PC-3 (cell line): ENCODE measurements at regions of chr9 and their contacts with region 1.

Region 1: GRCh38 chr9:21252721-21253547 is 13.1 kb upstream of the IFNA14 start:
- DNase-seq: peak; percentile 44
- ATAC-seq: peak; percentile 81
- H3K4me3 ChIP-seq: peak overlapping the region; percentile 42
- H3K27ac ChIP-seq: no peak overlapping the region
- H3K4me1 ChIP-seq: no peaks in the 10 kb centered on the region
- H3K27me3 ChIP-seq: peaks cover 14% of the 10 kb centered on the region
- CTCF ChIP-seq: peak; percentile 77

Region 2: DNA sequence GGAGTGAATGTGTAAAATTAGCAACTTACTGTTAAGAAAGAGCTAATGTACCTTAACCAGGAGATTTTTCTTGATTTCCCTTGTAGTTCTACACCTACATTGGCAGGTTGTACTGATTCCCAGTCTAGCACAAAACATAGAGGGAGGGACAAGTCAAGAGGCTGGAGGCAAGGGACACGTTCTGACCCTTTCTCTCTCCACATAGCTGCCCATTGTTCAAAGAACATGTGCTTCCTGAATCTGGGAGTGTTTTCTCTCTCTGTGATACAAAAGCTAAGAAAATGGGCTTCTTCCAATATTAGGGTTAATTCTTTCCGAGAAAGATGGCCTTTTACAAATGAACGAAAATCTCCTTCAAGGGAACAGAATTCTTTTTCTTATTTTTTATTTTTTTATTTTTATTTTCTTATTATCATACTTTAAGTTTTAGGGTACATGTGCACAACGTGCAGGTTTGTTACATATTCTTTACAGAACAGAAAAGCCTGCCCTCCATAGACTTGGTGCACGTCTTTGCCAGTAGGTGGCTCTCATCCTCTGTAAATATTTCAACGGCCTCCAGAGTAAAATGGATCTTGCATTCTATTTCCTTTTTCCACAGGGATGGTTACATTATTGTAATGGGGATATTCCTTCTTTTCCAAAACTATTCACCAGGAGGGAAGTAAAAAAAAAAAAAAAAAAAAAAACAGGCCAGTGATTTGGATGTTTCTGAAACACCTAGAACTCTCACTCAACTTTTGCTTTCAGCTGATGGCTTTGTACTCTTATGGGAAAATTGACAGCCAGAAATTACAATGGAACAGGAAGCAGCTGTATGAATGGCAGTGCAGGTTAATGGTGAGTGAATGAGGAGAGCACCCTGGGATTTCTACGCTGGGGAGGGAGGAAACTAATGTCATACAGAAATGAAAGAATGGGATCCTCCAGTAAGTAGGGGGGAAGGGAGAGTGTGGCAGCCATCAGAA is 65.3 kb after region 1 on chr9:
- CTCF ChIA-PET with region 1: interaction called, 9 read pairs
- POLR2A ChIA-PET with region 1: no interaction called
- intact Hi-C with region 1: loop called (anchors 2 kb)
- DNase-seq: peak; percentile 64
- ATAC-seq: peak; percentile 76
- H3K4me3 ChIP-seq: no peak overlapping the region
- H3K27ac ChIP-seq: no peak overlapping the region
- H3K4me1 ChIP-seq: no peaks in the 10 kb centered on the region
- H3K27me3 ChIP-seq: no peaks in the 10 kb centered on the region
- CTCF ChIP-seq: peak; percentile 62

Region 3: DNA sequence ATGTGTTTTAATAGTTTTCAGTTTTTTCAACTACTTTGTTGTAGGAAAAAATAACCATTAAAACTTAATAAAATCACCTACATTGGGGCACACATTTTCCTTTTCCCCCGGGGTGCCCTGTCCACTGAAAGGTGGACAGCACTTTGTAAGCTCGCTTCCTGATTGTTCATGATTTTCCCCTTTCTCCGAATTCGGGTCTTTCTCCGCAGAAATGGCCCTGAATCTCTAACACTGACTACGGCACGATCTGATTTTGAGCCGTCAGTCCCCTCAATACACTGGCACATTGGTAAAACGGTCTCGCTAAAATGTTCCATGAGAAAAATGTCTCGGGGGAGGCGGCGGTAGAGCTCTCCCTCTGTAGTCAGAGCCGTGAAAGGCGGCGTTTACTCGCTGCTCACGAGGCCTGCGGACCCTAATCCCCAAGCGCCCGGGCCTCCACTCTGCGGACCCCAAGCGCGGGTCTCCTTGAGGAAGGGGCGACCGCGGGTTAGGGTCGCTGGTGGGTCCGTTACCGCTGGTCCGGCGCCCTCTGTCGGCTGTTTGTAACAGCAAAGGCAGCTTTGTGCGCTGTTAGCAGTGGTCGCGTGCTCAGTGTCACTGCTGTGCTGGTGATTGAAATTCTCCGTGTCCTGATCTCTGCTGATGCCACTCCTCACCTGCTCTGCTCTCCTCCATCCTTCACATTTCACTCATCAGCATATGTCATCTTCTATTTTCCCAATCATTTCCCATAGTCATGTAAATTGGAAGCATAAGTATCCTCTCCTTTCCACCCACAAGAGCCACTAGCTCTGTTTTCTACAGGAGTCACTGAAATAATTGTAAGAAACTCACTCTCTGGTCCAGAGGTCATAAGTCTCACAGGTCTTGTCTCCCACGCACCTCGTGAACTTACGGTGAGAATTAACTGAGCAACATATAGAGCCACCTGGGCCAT is 143.1 kb after region 1 on chr9:
- CTCF ChIA-PET with region 1: interaction called, 6 read pairs
- POLR2A ChIA-PET with region 1: no interaction called
- intact Hi-C with region 1: loop called (anchors 2 kb)
- DNase-seq: peak; percentile 43
- ATAC-seq: peak; percentile 84
- H3K4me3 ChIP-seq: peak overlapping the region; percentile 76
- H3K27ac ChIP-seq: no peak overlapping the region
- H3K4me1 ChIP-seq: 0 out of 2 replicates have a peak, but pooled peaks cover 5% of the 10 kb centered on the region
- H3K27me3 ChIP-seq: peaks cover 3% of the 10 kb centered on the region; the same call in 1 of the 2 replicates
- CTCF ChIP-seq: peak; percentile 90

Region 4: GRCh38 chr9:21455320-21455719 is 202.4 kb after region 1 on chr9:
- CTCF ChIA-PET with region 1: no interaction called
- POLR2A ChIA-PET with region 1: no interaction called
- intact Hi-C with region 1: loop called (anchors 2 kb)
- DNase-seq: peak; percentile 54
- ATAC-seq: peak; percentile 77
- H3K4me3 ChIP-seq: no peak overlapping the region
- H3K27ac ChIP-seq: no peak overlapping the region
- H3K4me1 ChIP-seq: peaks cover 17% of the 10 kb centered on the region
- H3K27me3 ChIP-seq: no peaks in the 10 kb centered on the region
- CTCF ChIP-seq: peak; percentile 83

Region 5: GRCh38 chr9:21802195-21803000 is 549.5 kb after region 1 on chr9 and contains the start of gene MTAP:
- CTCF ChIA-PET with region 1: no interaction called
- POLR2A ChIA-PET with region 1: no interaction called
- intact Hi-C with region 1: no loop called
- DNase-seq: peak; percentile 85
- ATAC-seq: peak; percentile 95
- H3K4me3 ChIP-seq: peak within 1 kb of the TSS; percentile 94
- H3K27ac ChIP-seq: peak within 1 kb of the TSS; percentile 55
- H3K4me1 ChIP-seq: peaks cover 32% of the 10 kb centered on the region
- H3K27me3 ChIP-seq: no peaks in the 10 kb centered on the region
- CTCF ChIP-seq: no peak
- total RNA-seq, gene MTAP: 33.7 and 34.7 TPM in 2 replicates